Activated B cell treated with CpG ODN at 0.5 μM for 24 hours (primary cell): ENCODE measurements at regions of chr6 and their contacts with region 1.

Region 1: GRCh38 chr6:27472617-27473400 is at the start of gene ZNF184:
- DNase-seq: peak; percentile 85
- ATAC-seq: peak; percentile 92
- H3K4me3 Mint-ChIP-seq: peak within 1 kb of the TSS; percentile 95
- H3K27ac Mint-ChIP-seq: peak within 1 kb of the TSS; percentile 95
- H3K4me1 Mint-ChIP-seq: peaks cover 34% of the 10 kb centered on the region
- H3K27me3 Mint-ChIP-seq: no peaks in the 10 kb centered on the region
- CTCF ChIP-seq: no peak
- total RNA-seq, gene ZNF184: 8.1 and 8.6 TPM in 2 replicates

Region 2: GRCh38 chr6:26175428-26176181 is 1297.2 kb before region 1 on chr6:
- CTCF ChIA-PET with region 1: no interaction called
- POLR2A ChIA-PET with region 1: no interaction called
- intact Hi-C with region 1: loop called (anchors 10 kb)
- DNase-seq: no peak
- ATAC-seq: no peak
- H3K4me3 Mint-ChIP-seq: no peak overlapping the region
- H3K27ac Mint-ChIP-seq: peak overlapping the region; percentile 65
- H3K4me1 Mint-ChIP-seq: peaks cover 38% of the 10 kb centered on the region
- H3K27me3 Mint-ChIP-seq: no peaks in the 10 kb centered on the region
- CTCF ChIP-seq: no peak

Region 3: GRCh38 chr6:26596579-26597388 is 876.0 kb before region 1 on chr6 and contains the start of gene ABT1:
- CTCF ChIA-PET with region 1: no interaction called
- POLR2A ChIA-PET with region 1: no interaction called
- intact Hi-C with region 1: loop called (anchors 10 kb)
- DNase-seq: peak; percentile 91
- ATAC-seq: peak; percentile 90
- H3K4me3 Mint-ChIP-seq: no peak within 1 kb of the TSS
- H3K27ac Mint-ChIP-seq: no peak within 1 kb of the TSS
- H3K4me1 Mint-ChIP-seq: peaks cover 17% of the 10 kb centered on the region
- H3K27me3 Mint-ChIP-seq: peaks cover 5% of the 10 kb centered on the region
- CTCF ChIP-seq: no peak
- total RNA-seq, gene ABT1: 30.7 and 30.8 TPM in 2 replicates

Region 4: GRCh38 chr6:27518881-27519795 is 46.3 kb after region 1 on chr6:
- CTCF ChIA-PET with region 1: no interaction called
- POLR2A ChIA-PET with region 1: no interaction called
- intact Hi-C with region 1: loop called (anchors 1 kb)
- DNase-seq: peak; percentile 48
- ATAC-seq: peak; percentile 72
- H3K4me3 Mint-ChIP-seq: peak overlapping the region; percentile 83
- H3K27ac Mint-ChIP-seq: peak overlapping the region; percentile 82
- H3K4me1 Mint-ChIP-seq: peaks cover 15% of the 10 kb centered on the region
- H3K27me3 Mint-ChIP-seq: peaks cover 30% of the 10 kb centered on the region
- CTCF ChIP-seq: no peak

Region 5: GRCh38 chr6:28335564-28336283 is 862.9 kb after region 1 on chr6 and contains the start of gene ZSCAN31:
- CTCF ChIA-PET with region 1: no interaction called
- POLR2A ChIA-PET with region 1: no interaction called
- intact Hi-C with region 1: loop called (anchors 10 kb)
- DNase-seq: peak; percentile 61
- ATAC-seq: peak; percentile 93
- H3K4me3 Mint-ChIP-seq: no peak within 1 kb of the TSS
- H3K27ac Mint-ChIP-seq: no peak within 1 kb of the TSS
- H3K4me1 Mint-ChIP-seq: no peaks in the 10 kb centered on the region
- H3K27me3 Mint-ChIP-seq: no peaks in the 10 kb centered on the region
- CTCF ChIP-seq: no peak
- total RNA-seq, gene ZSCAN31: 1.0 and 3.6 TPM in 2 replicates

Region 6: GRCh38 chr6:28895134-28895812 is 1422.5 kb after region 1 on chr6:
- CTCF ChIA-PET with region 1: no interaction called
- POLR2A ChIA-PET with region 1: interaction called, 5 read pairs
- intact Hi-C with region 1: loop called (anchors 1 kb)
- DNase-seq: peak; percentile 66
- ATAC-seq: peak; percentile 66
- H3K4me3 Mint-ChIP-seq: peak overlapping the region; percentile 97
- H3K27ac Mint-ChIP-seq: peak overlapping the region; percentile 99
- H3K4me1 Mint-ChIP-seq: peaks cover 23% of the 10 kb centered on the region
- H3K27me3 Mint-ChIP-seq: peaks cover 3% of the 10 kb centered on the region
- CTCF ChIP-seq: no peak